Ascending aorta (tissue), 2 donors: ENCODE measurements at regions of chr1 and their contacts with region 1.

Region 1: DNA sequence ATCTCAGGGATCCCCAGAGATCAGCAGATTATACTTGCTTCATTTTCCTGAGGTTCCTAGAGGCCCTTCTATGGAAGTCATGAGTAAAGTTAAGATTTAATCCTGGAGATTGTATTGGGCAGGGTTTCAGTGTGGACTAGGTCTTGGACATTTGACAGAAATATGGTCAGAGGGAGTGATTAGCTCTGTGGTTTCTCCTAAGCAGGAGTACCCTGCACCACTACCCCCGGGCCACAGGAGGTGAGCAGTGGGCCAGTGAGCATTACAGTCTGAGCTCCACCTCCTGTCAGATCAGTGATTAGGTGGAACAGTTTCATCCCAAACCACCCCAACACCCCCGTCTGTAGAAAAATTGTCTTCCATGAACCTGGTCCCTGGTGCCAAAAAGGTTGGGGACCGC is 43.2 kb downstream of the PHACTR4 start:
- DNase-seq: no peak
- H3K4me3 ChIP-seq: no peak overlapping the region
- H3K27ac ChIP-seq: no peak overlapping the region
- H3K4me1 ChIP-seq: no peaks in the 10 kb centered on the region
- H3K27me3 ChIP-seq: no peaks in the 10 kb centered on the region
- CTCF ChIP-seq: no peak

Region 2: GRCh38 chr1:28259307-28260167 is 153.2 kb before region 1 on chr1 and contains the start of gene SESN2:
- intact Hi-C with region 1: no loop called
- DNase-seq: peak; percentile 98 to 100
- H3K4me3 ChIP-seq: peak within 1 kb of the TSS; percentile 99 to 100
- H3K27ac ChIP-seq: peak within 1 kb of the TSS; percentile 92 to 97
- H3K4me1 ChIP-seq: peaks cover 5 to 30% of the 10 kb centered on the region in 2 donors
- H3K27me3 ChIP-seq: no peaks in the 10 kb centered on the region
- CTCF ChIP-seq: no peak
- total RNA-seq, gene SESN2: 7.6 TPM

Region 3: DNA sequence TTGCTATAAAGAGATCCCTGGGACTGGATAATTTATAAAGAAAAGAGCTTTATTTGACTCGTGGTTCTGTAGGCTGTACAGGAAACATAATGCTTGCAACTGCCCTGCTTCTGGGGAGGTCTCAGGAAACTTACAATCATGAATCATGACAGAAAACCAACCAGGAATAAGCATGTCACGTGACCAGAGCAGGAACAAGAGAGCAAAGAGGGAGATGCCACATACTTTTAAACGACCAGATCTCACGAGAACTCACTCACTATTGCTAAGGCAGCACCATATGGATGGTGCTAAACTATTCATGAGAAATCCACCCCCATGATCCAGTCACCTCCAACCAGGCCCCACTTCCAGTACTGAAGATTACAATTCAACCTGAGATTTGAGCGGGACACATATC is 43.3 kb after region 1 on chr1:
- intact Hi-C with region 1: loop called (anchors 5 kb)
- DNase-seq: no peak
- H3K4me3 ChIP-seq: no peak overlapping the region
- H3K27ac ChIP-seq: no peak overlapping the region
- H3K4me1 ChIP-seq: peaks cover 0 to 6% of the 10 kb centered on the region in 2 donors
- H3K27me3 ChIP-seq: no peaks in the 10 kb centered on the region
- CTCF ChIP-seq: no peak

Region 4: DNA sequence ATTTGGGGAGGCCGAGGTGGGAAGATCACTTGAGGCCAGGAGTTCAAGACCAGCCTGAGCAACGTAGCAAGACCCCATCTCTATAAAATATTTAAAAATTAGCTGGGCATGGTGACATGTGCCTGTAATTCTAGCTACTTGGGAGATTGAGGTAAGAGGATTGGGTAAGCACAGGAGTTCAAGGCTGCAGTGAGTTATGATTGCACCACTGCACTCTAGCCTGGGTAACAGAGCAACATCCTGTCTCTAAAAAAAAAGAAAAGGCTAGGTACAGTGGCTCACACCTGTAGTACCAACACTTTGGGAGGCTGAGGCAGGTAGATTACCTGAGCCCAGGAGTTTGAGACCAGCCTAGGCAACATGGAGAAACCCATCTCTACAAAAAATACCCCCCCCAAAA is 57.4 kb after region 1 on chr1:
- intact Hi-C with region 1: loop called (anchors 5 kb)
- DNase-seq: no peak
- H3K4me3 ChIP-seq: no peak overlapping the region
- H3K27ac ChIP-seq: no peak overlapping the region
- H3K4me1 ChIP-seq: no peaks in the 10 kb centered on the region
- H3K27me3 ChIP-seq: no peaks in the 10 kb centered on the region
- CTCF ChIP-seq: no peak

Region 5: DNA sequence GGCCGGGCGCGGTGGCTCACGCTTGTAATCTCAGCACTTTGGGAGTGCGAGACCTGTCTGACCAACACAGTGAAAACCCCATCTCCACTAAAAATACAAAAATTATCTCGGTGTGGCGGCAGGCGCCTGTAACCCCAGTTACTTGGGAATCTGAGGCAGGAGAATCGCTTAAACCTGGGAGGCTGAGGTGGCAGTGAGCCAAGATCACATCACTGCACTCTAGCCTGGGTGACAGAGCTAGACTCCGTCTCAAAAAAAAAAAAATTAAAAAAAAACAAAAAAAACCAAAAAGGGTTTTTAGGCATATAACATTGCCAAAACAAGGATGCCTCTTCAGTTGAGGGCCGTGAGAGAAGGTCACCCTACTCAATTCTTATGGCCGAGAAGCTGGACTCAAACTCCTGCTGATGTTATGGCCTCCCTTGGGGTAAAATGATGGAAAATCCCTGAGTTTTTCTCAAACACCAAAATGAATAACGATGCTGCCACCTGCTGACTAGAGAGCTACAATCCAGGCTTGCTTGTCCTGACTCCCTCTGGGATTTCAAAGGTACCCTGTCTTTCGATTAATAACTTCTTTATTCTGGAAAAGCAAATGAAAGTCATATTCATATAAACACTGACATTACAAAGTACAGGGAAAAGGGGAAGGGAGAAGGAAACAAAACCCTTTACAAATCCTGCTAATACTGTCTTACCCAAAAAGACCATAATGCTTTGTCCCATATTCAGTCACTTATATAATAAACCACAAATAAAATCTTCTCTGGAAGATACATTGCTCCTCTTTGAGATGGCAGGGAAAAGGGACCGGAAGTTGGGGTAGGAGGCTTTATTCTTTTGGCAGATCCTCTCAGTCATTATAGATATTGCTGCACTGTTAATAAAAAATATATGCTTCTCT is 190.1 kb after region 1 on chr1:
- intact Hi-C with region 1: loop called (anchors 2 kb)
- DNase-seq: peak in 1 of 2 donors; percentile 78
- H3K4me3 ChIP-seq: no peak overlapping the region
- H3K27ac ChIP-seq: peak overlapping the region; percentile 53 to 65
- H3K4me1 ChIP-seq: peaks cover 6 to 8% of the 10 kb centered on the region in 2 donors
- H3K27me3 ChIP-seq: no peaks in the 10 kb centered on the region
- CTCF ChIP-seq: peak; percentile 52 to 68 (median 56)